OCI-LY7 (cell line): ENCODE measurements at regions of chr13 and their contacts with region 1.

Region 1: GRCh38 chr13:45340926-45341750 is at the start of gene TPT1:
- DNase-seq: peak; percentile 98
- H3K4me3 ChIP-seq: peak within 1 kb of the TSS; percentile 82
- H3K27ac ChIP-seq: peak within 1 kb of the TSS; percentile 78
- H3K4me1 ChIP-seq: peaks cover 40% of the 10 kb centered on the region
- CTCF ChIP-seq: no peak
- total RNA-seq, gene TPT1: 1,996 and 2,481 TPM in 2 replicates

Region 2: DNA sequence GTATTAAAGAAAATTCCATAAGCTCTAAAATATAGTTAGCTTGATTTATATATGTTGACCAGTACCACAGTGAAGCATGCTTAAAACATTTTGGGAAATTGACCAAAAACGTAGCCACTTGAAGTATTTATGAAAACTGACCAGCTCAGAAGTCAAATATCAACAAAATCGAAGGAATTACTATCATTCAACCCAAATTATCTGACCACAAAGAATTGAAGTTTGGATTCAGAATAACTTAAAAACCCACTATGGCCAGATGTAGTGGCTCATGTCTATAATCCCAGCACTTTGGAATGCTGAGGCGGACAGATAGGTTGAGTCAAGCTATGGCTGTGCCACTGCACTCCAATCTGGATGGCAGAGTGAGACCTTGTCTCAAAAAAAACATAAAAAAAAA is 319.9 kb before region 1 on chr13:
- CTCF ChIA-PET with region 1: no interaction called
- POLR2A ChIA-PET with region 1: no interaction called
- intact Hi-C with region 1: no loop called
- DNase-seq: no peak
- H3K4me3 ChIP-seq: no peak overlapping the region
- H3K27ac ChIP-seq: no peak overlapping the region
- H3K4me1 ChIP-seq: no peaks in the 10 kb centered on the region
- CTCF ChIP-seq: no peak

Region 3: DNA sequence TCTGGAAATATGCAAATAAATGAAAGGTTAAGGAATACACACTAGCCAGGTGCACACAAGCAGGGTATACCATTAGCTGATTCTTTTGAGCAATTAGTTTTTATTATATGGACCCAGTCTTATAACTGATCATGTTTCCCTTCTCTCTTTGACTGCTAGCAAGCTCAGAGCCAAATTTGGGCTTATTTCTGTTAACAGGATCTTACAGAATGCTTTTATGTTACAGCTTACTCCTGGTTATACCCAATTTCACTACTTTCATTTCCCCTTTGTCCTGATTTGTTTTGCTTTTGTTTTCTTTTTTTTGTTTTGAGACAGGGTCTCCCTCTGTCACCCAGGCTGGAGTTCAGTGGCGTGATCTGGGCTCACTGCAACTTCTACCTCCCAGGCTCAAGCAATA is 12.8 kb after region 1 on chr13:
- CTCF ChIA-PET with region 1: no interaction called
- POLR2A ChIA-PET with region 1: interaction called, 13 read pairs
- intact Hi-C with region 1: no loop called
- DNase-seq: no peak
- H3K4me3 ChIP-seq: no peak overlapping the region
- H3K27ac ChIP-seq: peak overlapping the region; percentile 29
- H3K4me1 ChIP-seq: peaks cover 12% of the 10 kb centered on the region
- CTCF ChIP-seq: no peak

Region 4: DNA sequence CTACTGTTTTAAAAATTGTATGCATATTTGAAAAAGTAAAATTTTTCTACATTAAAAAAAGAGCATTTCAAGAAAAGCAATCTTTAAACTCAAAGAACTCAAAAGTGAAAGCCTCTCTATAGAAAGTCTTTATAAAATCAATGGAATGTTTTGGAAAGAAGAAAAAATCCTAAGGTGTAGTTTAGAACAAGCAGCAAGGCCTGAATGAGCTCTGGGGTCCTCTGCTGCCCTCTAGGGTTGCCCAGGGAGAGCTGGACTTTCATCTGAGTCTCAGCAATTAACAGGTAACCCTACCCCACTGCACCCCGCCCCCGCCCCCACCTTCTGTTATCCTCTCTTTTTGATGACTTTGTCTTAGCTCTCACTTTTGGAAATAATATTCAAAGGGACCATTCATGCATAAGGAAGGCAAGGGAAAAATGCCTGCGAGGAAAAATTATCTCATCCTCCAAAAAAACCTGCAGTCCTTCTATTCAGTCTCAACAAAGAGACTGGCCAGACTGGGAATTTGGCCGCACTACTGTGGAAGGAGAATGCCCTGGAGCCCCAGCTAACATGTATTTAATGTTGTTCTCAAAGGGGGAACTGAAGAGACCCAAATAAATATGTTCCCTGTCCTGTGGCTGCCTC is 52.9 kb after region 1 on chr13:
- CTCF ChIA-PET with region 1: no interaction called
- POLR2A ChIA-PET with region 1: no interaction called
- intact Hi-C with region 1: loop called (anchors 5 kb)
- DNase-seq: peak; percentile 54
- H3K4me3 ChIP-seq: no peak overlapping the region
- H3K27ac ChIP-seq: no peak overlapping the region
- H3K4me1 ChIP-seq: no peaks in the 10 kb centered on the region
- CTCF ChIP-seq: peak; percentile 75

Region 5: DNA sequence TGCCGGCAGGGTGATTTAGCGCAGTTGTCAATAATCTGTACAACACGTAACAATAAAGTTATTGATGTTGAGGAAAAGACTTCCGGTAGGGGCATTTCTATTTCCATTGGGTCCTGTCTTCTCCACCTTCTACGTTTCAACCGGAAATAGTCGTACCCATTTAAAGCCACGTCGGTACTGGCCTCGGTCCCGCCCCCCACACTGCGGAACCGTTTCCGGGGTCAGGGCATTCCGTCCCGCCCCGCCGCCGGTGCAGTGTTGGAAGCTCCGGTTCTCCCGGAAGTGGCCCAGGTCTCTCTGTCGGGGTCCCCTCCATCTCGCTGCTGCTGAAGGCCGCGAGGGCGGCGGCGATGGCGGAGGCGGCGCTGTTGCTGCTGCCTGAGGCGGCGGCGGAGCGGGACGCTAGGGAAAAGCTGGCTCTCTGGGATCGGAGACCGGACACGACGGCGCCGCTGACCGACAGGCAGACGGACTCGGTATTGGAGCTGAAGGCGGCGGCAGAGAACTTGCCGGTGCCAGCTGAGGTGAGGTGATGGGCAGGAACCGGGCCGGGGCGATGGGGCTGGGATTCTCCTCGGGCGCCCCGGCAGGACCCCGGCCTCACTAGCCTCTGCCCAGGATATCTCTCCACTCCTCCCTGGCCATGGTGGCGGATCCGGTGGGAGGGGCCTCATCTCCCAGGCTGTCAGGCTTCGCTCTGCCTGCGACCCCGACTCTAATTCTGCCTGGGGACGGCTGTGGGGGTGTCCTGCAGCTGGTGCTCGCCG is 123.7 kb after region 1 on chr13 and contains the start of gene COG3:
- CTCF ChIA-PET with region 1: no interaction called
- POLR2A ChIA-PET with region 1: interaction called, 5 read pairs
- intact Hi-C with region 1: loop called (anchors 2 kb)
- DNase-seq: peak; percentile 97
- H3K4me3 ChIP-seq: peak within 1 kb of the TSS; percentile 97
- H3K27ac ChIP-seq: peak within 1 kb of the TSS; percentile 53
- H3K4me1 ChIP-seq: peaks cover 23% of the 10 kb centered on the region
- CTCF ChIP-seq: peak; percentile 11; the same call in 1 of the 2 replicates
- total RNA-seq, gene COG3: 28.9 and 50.5 TPM in 2 replicates